Posterior cingulate gyrus (tissue), 11 donors: ENCODE measurements at regions of chr10 and their contacts with region 1.

Region 1: DNA sequence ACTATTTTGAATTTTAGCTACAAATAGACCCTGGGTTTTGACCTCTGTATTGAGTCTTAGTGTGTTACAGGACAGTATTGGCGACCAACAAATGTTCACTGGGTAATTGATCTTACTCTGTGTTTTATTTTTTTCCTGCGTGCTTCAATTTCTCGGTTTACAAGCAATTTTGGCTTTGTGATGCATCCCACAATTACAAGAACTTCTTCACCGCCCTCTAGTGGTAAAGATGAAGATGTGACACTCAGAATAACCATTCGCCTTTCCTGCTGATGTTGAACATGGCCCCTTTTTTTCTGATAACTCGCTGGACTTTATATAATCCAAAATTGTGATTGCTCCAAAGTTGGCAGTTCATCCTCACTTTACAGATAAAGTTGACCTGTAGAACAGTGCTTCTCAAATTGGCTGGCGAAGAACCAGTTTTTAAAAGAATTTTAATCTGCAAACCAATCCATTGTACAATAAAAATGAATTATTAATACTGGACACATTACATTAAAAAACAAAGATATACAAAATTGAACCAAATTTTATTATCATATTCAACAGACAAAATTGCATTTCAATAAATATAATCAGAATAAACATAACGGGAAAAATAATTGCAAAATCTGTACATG is 20.2 kb upstream of the SMC3 start:
- DNase-seq: no peak

Region 2: DNA sequence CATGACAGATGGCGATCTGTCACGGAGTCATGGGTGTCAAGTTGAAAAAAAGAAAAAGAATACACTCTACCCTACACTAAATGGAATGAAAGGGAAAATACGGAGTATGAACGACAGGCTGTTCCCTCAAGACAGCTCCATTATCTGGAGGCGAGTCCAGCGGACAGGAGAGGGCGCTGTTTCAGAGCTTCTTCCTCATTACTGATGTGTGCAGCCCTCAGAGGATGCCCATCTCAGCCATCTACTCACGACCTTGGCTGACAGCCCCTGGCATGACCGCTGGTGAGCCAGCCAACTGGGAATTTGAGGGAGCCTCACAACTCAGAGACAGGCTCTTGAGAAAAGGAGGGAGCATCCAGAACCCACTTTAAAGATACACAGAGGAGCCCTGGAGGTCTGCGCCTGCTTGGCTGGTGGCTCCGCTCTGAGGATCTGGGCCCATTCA is 192.9 kb before region 1 on chr10:
- intact Hi-C with region 1: loop called (anchors 2 kb)
- DNase-seq: peak; percentile 33 to 95 (median 77)

Region 3: GRCh38 chr10:110497438-110498086 is 49.7 kb before region 1 on chr10 and contains the start of gene DUSP5:
- intact Hi-C with region 1: loop called (anchors 5 kb)
- DNase-seq: peak; percentile 81 to 99 (median 92)

Region 4: DNA sequence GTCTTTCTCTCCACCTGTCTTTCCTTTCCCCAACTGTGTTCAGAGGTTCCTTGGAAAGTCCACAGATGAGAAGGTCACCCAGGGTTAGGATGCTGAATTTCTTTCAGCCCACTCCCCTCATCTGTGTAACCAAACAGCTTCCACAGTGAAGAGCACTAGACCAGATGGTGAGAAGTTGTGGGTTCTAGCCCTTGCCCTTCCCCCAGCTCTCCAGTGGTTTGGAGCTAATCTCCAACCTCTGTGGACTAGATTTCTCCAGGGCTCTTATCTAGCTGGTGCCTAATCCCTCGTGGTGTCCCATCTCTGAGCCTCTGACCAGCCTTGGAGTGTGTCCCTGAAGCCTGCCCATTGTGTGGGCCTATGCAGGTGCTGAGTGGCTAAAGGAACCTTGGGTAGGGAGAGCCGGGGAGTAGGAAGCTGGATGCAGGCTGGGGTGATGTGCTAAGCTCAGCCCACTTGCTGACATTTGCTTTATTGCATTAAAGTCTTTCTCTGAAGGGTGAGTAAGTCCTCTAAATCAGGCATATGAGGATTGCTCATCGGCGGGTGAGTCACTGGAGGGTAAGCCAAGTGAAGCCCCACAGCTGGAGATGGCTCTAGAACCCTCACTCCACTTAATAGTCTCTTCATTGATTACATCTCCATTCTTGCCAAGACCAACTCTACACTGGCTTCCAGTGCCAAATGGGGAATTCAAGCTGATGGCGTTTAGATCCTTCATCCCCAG is 34.6 kb before region 1 on chr10:
- intact Hi-C with region 1: no loop called
- DNase-seq: peak in 1 of 10 donors; percentile 84

Region 5: GRCh38 chr10:110567201-110568054 is 20.2 kb after region 1 on chr10 and contains the start of gene SMC3:
- intact Hi-C with region 1: loop called (anchors 1 kb)
- DNase-seq: peak; percentile 87 to 98 (median 91)